ENCODE measurements at regions of chr3 and their contacts with region 1.

Region 1: GRCh38 chr3:31448035-31448881 is 84.5 kb upstream of the STT3B start:
- DNase-seq: peak; percentile 32
- CTCF ChIP-seq: peak; percentile 77

Region 2: DNA sequence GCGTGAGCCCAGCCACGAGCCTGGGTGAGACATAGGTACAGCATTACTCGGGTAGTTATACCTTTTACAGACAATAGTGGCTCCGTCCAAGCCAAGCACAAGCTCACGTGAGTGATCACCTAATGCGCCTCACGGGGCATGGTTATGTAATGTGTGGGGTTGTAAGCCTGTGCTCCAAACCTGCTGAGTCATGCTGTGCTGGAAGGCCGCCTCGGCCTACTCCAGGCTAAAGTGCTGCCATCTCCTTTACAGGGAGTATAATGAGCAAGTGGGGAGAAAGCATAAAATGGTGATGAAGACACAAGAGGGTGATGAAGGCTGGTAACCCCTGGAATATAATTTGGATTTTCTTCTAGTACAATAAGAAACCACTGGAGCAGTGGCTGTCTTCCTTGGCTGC is 91.3 kb before region 1 on chr3:
- CTCF ChIA-PET with region 1: no interaction called
- POLR2A ChIA-PET with region 1: no interaction called
- DNase-seq: no peak
- CTCF ChIP-seq: no peak

Region 3: GRCh38 chr3:31432897-31433678 is 15.2 kb before region 1 on chr3:
- CTCF ChIA-PET with region 1: interaction called, 10 read pairs
- POLR2A ChIA-PET with region 1: no interaction called
- DNase-seq: no peak
- CTCF ChIP-seq: no peak

Region 4: DNA sequence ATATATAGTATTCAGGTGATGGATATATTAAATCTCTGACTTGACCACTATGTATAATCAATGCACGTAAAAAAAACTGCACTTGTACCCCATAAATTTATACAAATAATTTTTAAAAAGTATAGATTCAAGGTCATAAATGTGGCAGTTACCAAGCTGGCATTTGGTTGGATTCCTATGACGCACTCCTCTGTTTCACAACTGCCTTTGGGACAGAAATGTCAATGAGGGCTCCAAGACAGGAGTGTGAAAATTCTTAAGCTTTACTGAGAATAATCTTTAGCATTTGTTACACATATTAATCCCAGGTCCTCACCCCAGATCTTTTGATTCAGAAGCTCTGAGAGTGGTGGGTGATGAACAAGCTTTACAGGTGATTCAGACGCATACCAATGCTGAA is 11.4 kb after region 1 on chr3:
- CTCF ChIA-PET with region 1: interaction called, 13 read pairs
- POLR2A ChIA-PET with region 1: no interaction called
- DNase-seq: no peak
- CTCF ChIP-seq: no peak

Region 5: GRCh38 chr3:31465999-31466398 is 17.7 kb after region 1 on chr3:
- CTCF ChIA-PET with region 1: interaction called, 11 read pairs
- POLR2A ChIA-PET with region 1: no interaction called
- DNase-seq: no peak
- CTCF ChIP-seq: no peak